Lower leg skin (tissue), 4 donors: ENCODE measurements at regions of chr2 and their contacts with region 1.

Region 1: DNA sequence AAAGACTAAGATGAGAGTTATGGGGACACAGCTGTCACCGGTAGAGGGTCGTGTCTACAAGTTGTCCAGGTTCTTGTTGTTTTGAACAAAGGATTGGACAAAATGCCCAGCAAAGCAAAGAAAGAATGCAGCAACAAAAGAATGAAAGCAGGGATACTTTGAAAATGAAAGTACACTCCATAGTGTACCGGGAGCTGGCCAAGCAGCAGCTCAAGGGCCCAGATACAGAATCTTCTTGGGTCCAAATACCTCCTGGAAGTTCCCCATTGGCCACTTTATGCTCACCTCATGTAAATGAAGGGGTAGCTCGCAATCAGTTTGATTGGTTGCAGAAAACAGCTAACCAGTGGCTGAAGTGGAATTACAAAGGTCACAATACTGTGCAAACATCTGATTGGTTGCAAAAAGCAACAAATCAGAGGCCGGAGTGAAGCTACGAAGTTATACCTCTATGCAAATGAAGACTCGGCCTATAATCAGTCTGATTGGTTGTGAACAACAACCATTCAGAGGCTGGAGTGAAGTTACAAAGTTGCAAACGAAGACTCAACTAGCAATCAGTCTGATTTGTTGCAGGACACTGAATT is 474.9 kb upstream of the TMEFF2 start:
- DNase-seq: no peak
- H3K4me3 ChIP-seq: no peak overlapping the region
- CTCF ChIP-seq: no peak
- POLR2A ChIP-seq: no peak

Region 2: DNA sequence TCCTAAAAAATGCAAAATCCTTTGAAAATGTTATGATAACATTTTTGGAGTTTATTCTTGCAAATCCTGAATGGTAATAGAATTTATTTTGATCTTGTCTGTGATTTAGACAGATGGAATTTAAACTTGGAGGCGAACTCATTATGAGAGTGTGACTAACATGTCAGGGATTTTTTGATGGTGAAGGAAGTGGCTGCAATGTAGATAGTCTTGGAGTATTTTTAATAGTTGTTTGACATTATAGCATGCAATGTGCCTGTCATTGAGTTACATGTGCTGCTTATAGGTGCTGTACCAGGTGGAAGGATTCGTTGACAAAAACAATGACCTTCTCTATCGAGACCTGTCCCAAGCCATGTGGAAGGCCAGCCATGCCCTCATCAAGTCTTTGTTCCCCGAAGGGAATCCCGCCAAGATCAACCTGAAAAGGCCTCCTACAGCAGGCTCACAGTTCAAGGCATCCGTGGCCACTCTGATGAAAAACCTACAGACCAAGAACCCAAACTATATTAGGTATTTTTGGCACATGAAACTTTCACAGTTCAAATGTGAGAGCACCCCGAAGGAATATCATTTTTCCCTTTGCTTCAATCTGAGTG is 1282.6 kb before region 1 on chr2:
- intact Hi-C with region 1: loop called (anchors 5 kb)
- DNase-seq: no peak
- H3K4me3 ChIP-seq: no peak overlapping the region
- CTCF ChIP-seq: no peak
- POLR2A ChIP-seq: no peak

Region 3: DNA sequence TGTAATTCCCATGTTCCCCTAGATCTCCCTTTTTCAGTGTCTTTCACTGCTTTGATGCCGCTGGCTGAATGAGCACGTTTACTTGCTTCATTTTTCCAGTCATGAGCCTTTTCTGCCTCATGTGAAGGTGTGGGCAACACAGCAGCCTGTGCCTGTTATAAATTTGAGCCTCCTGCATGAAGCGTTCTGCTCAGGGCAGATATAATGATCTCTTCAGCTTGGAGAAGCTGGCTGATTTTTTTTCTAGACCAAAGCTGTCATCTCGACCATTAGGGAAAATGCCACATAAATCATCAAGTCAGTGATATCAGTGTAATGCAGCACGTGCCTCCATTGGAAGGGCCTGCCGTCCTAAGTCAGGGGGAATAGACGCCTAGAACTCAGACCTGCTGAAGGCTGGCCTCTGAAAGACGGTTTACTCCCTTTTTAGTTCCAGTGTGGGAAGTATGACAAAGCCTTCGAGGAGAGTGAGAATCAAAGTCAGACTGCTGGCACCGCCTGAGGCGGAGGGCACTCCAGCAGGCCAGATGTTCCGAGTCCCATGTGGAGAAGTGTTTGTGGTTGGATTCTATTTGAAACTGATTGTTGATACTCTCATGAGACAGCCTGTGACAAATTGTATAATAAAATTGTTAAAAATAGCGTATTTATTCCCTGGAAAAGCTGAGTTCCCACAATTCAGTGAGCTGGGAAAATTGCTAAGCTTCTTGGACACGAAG is 1227.9 kb before region 1 on chr2:
- intact Hi-C with region 1: no loop called
- DNase-seq: peak in 1 of 2 donors; percentile 35
- H3K4me3 ChIP-seq: no peak overlapping the region
- CTCF ChIP-seq: no peak
- POLR2A ChIP-seq: no peak

Region 4: GRCh38 chr2:192578780-192579179 is 90.8 kb before region 1 on chr2:
- intact Hi-C with region 1: no loop called
- DNase-seq: no peak
- H3K4me3 ChIP-seq: no peak overlapping the region
- CTCF ChIP-seq: no peak
- POLR2A ChIP-seq: no peak

Region 5: GRCh38 chr2:192645811-192646598 is 23.6 kb before region 1 on chr2:
- intact Hi-C with region 1: no loop called
- DNase-seq: no peak
- H3K4me3 ChIP-seq: no peak overlapping the region
- CTCF ChIP-seq: no peak
- POLR2A ChIP-seq: no peak